Prostate gland (tissue), 2 donors: ENCODE measurements at regions of chr11 and their contacts with region 1.

Region 1: GRCh38 chr11:8225589-8226036 is 38.1 kb downstream of the LMO1 start:
- DNase-seq: peak; percentile 63
- H3K4me3 ChIP-seq: no peak overlapping the region
- H3K27ac ChIP-seq: no peak overlapping the region
- H3K4me1 ChIP-seq: no peaks in the 10 kb centered on the region
- H3K27me3 ChIP-seq: no peaks in the 10 kb centered on the region
- CTCF ChIP-seq: peak; percentile 87 to 96 (median 92)
- POLR2A ChIP-seq: no peak

Region 2: GRCh38 chr11:8263769-8264410 is 38.3 kb after region 1 on chr11 and contains the start of gene LMO1:
- intact Hi-C with region 1: loop called (anchors 2 kb)
- DNase-seq: peak; percentile 73
- H3K4me3 ChIP-seq: peak within 1 kb of the TSS; percentile 30 to 45
- H3K27ac ChIP-seq: no peak within 1 kb of the TSS
- H3K4me1 ChIP-seq: no peaks in the 10 kb centered on the region
- H3K27me3 ChIP-seq: peaks cover 3% of the 10 kb centered on the region
- CTCF ChIP-seq: peak; percentile 68 to 80 (median 76)
- POLR2A ChIP-seq: no peak
- total RNA-seq, gene LMO1: not detected